HCT116 (cell line): ENCODE measurements at regions of chr16 and their contacts with region 1.

Region 1: GRCh38 chr16:11255737-11256660 is at the start of gene SOCS1:
- DNase-seq: peak; percentile 47
- ATAC-seq: peak; percentile 79
- H3K4me3 ChIP-seq: peak within 1 kb of the TSS; percentile 70 to 79
- H3K27ac ChIP-seq: peak within 1 kb of the TSS; percentile 85
- H3K4me1 ChIP-seq: peaks cover 8 to 31% of the 10 kb centered on the region in 2 experiments; a peak in 3 of 4 replicates
- H3K27me3 ChIP-seq: no peaks in the 10 kb centered on the region
- CTCF ChIP-seq: peak; percentile 75 to 82 (median 77)
- POLR2A ChIP-seq: peak; percentile 92
- RAD21 ChIP-seq: peak; percentile 90
- total RNA-seq, gene SOCS1: 4.9 TPM

Region 2: DNA sequence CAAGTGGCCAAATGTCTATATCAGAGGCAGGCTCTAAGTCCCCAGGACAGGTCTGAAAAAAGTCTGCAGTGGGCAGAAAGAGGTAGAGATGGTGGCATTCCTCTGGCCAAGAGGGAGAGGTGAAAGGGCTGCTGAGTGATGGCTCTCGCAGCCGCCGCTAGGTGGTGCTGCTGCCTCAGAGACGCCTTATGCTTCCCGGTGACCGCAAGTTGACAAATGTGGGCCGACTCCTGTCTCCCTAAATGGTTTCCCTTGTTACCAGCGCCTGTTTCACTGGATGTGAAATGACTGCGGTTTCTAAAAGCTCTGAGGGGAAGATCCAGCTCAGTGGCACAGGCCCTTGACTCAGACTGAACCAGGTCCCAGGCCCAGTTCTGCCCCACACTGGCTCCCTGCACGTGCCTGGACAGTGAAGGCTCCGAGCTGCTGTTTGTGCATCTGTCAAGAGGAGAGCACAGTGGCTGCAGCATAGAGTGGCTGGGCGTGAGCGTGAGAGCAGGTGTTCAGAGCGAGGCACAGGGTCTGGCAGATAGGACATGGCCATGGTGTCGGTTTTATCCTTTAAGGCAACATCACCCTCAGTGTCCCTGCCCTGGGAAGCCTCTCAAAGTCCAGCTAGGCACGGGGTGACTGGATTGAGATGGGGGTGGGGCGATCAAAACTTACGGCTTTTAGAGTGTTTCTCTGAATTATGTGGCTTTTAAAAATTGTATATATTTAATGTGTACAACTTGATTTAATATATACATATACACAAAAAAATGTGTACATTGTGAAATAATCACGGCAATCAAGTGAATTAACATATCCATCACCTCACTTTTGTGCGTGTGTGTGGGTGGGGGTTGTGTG is 291.7 kb before region 1 on chr16:
- CTCF ChIA-PET with region 1: interaction called, 32 read pairs
- POLR2A ChIA-PET with region 1: interaction called, 11 read pairs
- RAD21 ChIA-PET with region 1: interaction called, 3 to 5 read pairs
- intact Hi-C with region 1: no loop called
- DNase-seq: peak; percentile 32
- ATAC-seq: peak; percentile 96
- H3K4me3 ChIP-seq: no peak overlapping the region
- H3K27ac ChIP-seq: no peak overlapping the region
- H3K4me1 ChIP-seq: peaks cover 0 to 3% of the 10 kb centered on the region in 2 experiments; a peak in 1 of 4 replicates
- H3K27me3 ChIP-seq: no peaks in the 10 kb centered on the region
- CTCF ChIP-seq: peak; percentile 76 to 96 (median 96)
- POLR2A ChIP-seq: no peak
- RAD21 ChIP-seq: peak; percentile 92

Region 3: GRCh38 chr16:10981697-10982216 is 274.2 kb before region 1 on chr16:
- CTCF ChIA-PET with region 1: interaction called, 24 read pairs
- POLR2A ChIA-PET with region 1: interaction called, 14 read pairs
- RAD21 ChIA-PET with region 1: interaction called in 1 of 2 experiments, 3 read pairs
- intact Hi-C with region 1: no loop called
- DNase-seq: peak; percentile 42
- ATAC-seq: peak; percentile 98
- H3K4me3 ChIP-seq: no peak overlapping the region
- H3K27ac ChIP-seq: no peak overlapping the region
- H3K4me1 ChIP-seq: peaks cover 0 to 5% of the 10 kb centered on the region in 2 experiments; a peak in 1 of 4 replicates
- H3K27me3 ChIP-seq: no peaks in the 10 kb centered on the region
- CTCF ChIP-seq: peak; percentile 38 to 79 (median 72); a peak in 5 of 6 replicates
- POLR2A ChIP-seq: no peak
- RAD21 ChIP-seq: peak; percentile 37

Region 4: DNA sequence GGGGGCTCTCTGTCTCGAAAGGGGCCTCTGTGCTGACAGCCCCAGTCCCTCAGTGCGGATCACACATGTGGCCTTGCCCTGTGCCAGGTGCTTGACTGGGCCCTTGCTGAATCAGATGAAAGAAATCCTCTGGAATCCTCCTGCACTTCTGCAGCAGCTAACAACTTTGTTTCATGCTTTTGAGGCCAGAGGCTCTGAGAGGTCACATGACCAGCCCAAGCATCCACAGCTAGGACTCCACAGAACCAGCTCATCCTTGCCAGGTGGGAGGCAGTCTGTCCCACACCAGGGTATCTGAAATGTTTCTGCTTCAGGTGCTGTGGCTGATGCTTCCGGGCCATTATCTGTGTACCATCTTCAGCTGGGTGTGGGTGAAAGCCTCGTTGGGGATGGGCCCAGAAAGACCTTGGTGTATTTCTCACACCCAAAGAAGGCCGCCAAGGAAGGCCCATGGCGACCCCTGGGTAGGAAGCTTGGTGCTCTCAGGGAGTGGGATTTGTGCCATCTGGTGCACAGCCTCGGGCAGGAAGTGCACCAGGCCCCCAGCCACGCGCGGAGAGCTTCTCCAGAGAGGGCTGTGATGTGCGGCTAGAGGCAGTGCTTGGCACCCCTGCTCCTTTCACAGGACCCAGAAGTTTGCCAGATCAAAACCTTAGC is 167.8 kb before region 1 on chr16:
- CTCF ChIA-PET with region 1: no interaction called
- POLR2A ChIA-PET with region 1: interaction called, 15 read pairs
- RAD21 ChIA-PET with region 1: interaction called in 1 of 2 experiments, 4 read pairs
- intact Hi-C with region 1: no loop called
- DNase-seq: no peak
- ATAC-seq: peak; percentile 10; the same call in 1 of the 2 replicates
- H3K4me3 ChIP-seq: no peak overlapping the region
- H3K27ac ChIP-seq: peak overlapping the region; percentile 59
- H3K4me1 ChIP-seq: peaks cover 84 to 98% of the 10 kb centered on the region in 2 experiments
- H3K27me3 ChIP-seq: no peaks in the 10 kb centered on the region
- CTCF ChIP-seq: no peak
- POLR2A ChIP-seq: no peak
- RAD21 ChIP-seq: no peak

Region 5: DNA sequence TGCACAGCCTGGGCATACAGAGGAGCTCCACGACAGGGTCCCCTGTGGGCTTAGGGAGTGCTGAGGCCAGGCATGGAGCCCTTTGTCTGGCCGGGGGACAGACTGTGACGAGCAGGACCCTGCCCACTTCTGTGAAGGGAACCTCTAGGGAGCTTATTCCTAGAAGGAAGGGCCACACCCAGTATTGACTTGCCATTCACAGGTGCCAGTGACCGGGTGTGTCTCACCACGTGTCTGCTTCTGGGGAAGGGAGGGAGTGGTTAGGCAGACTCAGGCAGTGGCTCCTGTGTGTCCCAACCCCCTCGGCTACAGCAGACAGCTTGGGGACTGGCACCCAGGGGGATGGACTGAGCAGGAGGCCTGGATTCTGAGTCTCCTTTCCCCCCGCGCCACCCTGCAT is 57.2 kb before region 1 on chr16:
- CTCF ChIA-PET with region 1: interaction called, 5 read pairs
- POLR2A ChIA-PET with region 1: interaction called, 13 read pairs
- RAD21 ChIA-PET with region 1: no interaction called
- intact Hi-C with region 1: no loop called
- DNase-seq: peak; percentile 70
- ATAC-seq: peak; percentile 77
- H3K4me3 ChIP-seq: peak overlapping the region in 1 of 2 experiments; percentile 36; a peak in 2 of 4 replicates
- H3K27ac ChIP-seq: no peak overlapping the region
- H3K4me1 ChIP-seq: peaks cover 35 to 56% of the 10 kb centered on the region in 2 experiments
- H3K27me3 ChIP-seq: no peaks in the 10 kb centered on the region
- CTCF ChIP-seq: no peak
- POLR2A ChIP-seq: no peak
- RAD21 ChIP-seq: no peak

Region 6: DNA sequence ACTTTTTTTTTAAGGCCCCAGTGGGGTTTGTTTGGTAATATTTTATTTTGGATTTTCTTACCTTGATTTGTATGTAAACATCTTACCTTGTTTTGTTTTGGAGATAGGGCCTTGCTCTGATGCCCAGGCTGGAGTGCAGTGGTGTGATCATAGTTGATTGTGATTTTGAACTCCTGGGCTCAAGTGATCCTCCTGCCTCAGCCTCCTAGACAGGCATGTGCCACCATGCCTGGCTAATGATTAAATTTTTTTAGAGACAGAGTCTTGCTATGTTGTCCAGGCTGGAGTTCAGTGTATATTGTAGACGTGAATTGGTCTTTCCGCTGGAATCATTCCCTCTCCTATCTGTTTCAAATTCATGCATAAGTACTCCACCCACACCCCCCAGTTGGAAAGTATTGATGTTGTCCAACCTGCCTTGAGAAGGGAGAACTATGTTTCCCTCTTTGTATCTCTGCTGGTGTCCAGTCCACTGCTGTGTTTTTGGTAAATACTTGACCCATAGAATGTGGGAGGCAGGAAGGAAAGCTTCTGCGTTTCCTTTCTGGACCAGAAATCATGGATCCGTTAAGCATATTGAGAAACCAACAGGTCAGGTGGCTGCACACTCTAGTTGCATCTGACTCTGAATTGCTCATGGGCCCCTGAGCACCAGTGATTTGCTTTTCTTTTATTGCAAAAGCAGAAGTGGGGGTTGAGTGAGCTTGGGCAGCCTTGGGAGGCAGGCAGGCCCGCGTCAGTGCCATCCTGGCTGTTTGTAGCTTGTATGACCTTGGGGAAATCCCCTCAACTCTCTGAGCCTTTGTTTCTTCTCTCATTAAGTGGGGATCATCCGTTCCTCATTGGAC is 114.3 kb after region 1 on chr16:
- CTCF ChIA-PET with region 1: interaction called, 7 read pairs
- POLR2A ChIA-PET with region 1: interaction called, 7 read pairs
- RAD21 ChIA-PET with region 1: interaction called in 1 of 2 experiments, 3 read pairs
- intact Hi-C with region 1: loop called (anchors 5 kb)
- DNase-seq: no peak
- ATAC-seq: no peak
- H3K4me3 ChIP-seq: no peak overlapping the region
- H3K27ac ChIP-seq: no peak overlapping the region
- H3K4me1 ChIP-seq: peaks cover 0 to 5% of the 10 kb centered on the region in 2 experiments; a peak in 2 of 4 replicates
- H3K27me3 ChIP-seq: no peaks in the 10 kb centered on the region
- CTCF ChIP-seq: no peak
- POLR2A ChIP-seq: no peak
- RAD21 ChIP-seq: no peak